Activated CD4-positive, alpha-beta T cell treated with anti-CD3 and anti-CD28 coated beads, Interleukin-2, amount 10 ng/mL, durations not matched to agents 24 days and 14 days (primary cell): ENCODE measurements at regions of chr5 and their contacts with region 1.

Region 1: GRCh38 chr5:90529194-90529938 is at the start of gene LYSMD3:
- DNase-seq: peak; percentile 98
- H3K4me3 Mint-ChIP-seq: peak within 1 kb of the TSS; percentile 98
- H3K27ac Mint-ChIP-seq: peak within 1 kb of the TSS; percentile 97
- H3K4me1 Mint-ChIP-seq: peaks cover 26% of the 10 kb centered on the region
- H3K27me3 Mint-ChIP-seq: peaks cover 24% of the 10 kb centered on the region
- total RNA-seq, gene LYSMD3: 11.3 and 12.9 TPM in 2 replicates

Region 2: DNA sequence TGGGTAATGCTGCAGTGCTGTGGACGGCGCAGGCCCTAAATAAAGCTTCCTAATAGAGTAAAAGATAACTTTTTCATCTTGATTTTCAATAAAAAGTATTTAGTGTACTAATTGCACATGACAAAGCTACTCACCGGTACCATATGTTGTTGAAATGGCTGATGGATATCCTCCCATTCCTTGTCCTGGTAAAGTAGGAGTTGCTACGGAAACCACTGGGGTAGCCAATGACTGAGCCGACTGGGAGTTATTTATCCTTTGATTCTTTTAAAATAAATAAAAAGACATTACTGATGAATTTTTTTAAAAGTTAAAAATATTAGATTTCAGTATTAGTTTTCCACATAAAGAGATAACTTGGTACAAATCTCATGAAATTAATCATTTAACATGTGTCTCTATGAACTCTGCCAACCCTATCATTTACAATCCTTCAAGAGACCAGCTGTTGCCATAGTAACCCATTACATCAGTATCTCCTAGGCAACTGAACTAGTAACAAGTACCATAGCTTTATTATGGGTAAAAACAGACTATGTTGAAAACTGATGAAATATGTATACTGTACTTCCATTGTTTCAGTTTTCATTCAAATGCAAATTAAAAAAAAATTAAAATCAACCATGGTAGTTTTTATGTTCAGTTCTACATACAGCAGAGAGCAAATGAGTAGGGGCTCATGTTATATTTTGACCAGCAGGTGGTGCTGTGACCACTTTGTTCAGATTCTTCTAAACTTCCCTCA is 1800.1 kb before region 1 on chr5:
- intact Hi-C with region 1: loop called (anchors 10 kb)
- DNase-seq: peak; percentile 85
- H3K4me3 Mint-ChIP-seq: no peak overlapping the region
- H3K27ac Mint-ChIP-seq: no peak overlapping the region
- H3K4me1 Mint-ChIP-seq: peaks cover 2% of the 10 kb centered on the region
- H3K27me3 Mint-ChIP-seq: peaks cover 10% of the 10 kb centered on the region

Region 3: GRCh38 chr5:90409318-90410177 is 119.8 kb before region 1 on chr5 and contains the start of gene CETN3:
- intact Hi-C with region 1: loop called (anchors 1 kb)
- DNase-seq: peak; percentile 96
- H3K4me3 Mint-ChIP-seq: no peak within 1 kb of the TSS
- H3K27ac Mint-ChIP-seq: no peak within 1 kb of the TSS
- H3K4me1 Mint-ChIP-seq: peaks cover 14% of the 10 kb centered on the region
- H3K27me3 Mint-ChIP-seq: peaks cover 3% of the 10 kb centered on the region
- total RNA-seq, gene CETN3: 39.4 and 40.0 TPM in 2 replicates

Region 4: GRCh38 chr5:90434116-90434714 is 95.2 kb before region 1 on chr5:
- intact Hi-C with region 1: loop called (anchors 1 kb)
- DNase-seq: peak; percentile 82
- H3K4me3 Mint-ChIP-seq: no peak overlapping the region
- H3K27ac Mint-ChIP-seq: no peak overlapping the region
- H3K4me1 Mint-ChIP-seq: peaks cover 5% of the 10 kb centered on the region
- H3K27me3 Mint-ChIP-seq: peaks cover 27% of the 10 kb centered on the region

Region 5: DNA sequence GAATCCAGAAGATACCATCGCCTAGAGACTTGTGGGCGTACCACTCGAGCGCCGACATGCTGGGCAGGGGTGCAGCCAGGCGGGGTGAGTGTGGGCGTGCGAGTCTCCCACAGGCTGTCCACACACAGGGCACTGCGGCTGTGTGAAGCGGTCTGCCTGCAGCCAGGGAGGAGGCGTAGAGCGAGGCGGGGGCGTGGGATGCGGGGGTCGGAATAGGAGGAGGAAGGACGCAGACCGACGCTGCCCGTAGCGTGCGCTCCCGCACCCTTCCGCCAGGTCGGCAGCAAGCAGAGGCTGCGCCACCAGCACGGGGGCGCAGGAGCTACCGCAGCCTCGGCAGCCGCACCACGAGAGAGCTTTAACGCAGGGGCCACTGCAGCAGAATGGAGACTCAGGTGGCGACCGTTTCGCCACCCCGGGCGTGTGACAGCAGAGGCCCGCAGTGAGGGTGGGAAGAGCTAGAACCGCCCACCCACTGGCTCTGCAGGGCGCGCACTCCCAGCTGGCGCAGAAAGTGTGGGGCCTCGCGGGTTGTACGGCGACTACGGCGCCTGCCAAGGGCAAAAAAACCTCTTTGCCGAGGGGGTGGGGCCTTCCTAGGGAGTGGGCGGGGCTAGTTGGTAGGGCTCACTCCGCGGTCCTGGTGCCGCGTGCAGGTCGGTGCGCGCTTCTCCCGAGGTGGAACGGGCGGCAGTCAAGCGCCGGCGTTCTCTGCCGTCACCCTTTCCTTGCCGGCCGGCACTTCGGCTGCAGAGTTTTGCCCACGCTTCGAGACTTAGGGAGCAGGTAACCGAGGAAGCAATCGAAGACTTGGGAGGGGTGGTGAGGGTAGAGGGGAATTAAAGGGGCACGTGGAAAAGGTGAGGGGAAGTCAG is 54.9 kb before region 1 on chr5 and contains the starts of genes MBLAC2 and POLR3G:
- intact Hi-C with region 1: loop called (anchors 1 kb)
- DNase-seq: peak; percentile 97
- H3K4me3 Mint-ChIP-seq: peak within 1 kb of the TSS; percentile 98
- H3K27ac Mint-ChIP-seq: peak within 1 kb of the TSS; percentile 97
- H3K4me1 Mint-ChIP-seq: peaks cover 38% of the 10 kb centered on the region
- H3K27me3 Mint-ChIP-seq: no peaks in the 10 kb centered on the region
- total RNA-seq, gene MBLAC2: 6.1 and 6.4 TPM in 2 replicates
- total RNA-seq, gene POLR3G: 22.2 and 25.1 TPM in 2 replicates

Region 6: GRCh38 chr5:90488791-90489190 is 40.6 kb before region 1 on chr5:
- intact Hi-C with region 1: no loop called
- DNase-seq: no peak
- H3K4me3 Mint-ChIP-seq: no peak overlapping the region
- H3K27ac Mint-ChIP-seq: no peak overlapping the region
- H3K4me1 Mint-ChIP-seq: no peaks in the 10 kb centered on the region
- H3K27me3 Mint-ChIP-seq: no peaks in the 10 kb centered on the region

Region 7: GRCh38 chr5:91126448-91126847 is 597.1 kb after region 1 on chr5:
- intact Hi-C with region 1: no loop called
- DNase-seq: peak; percentile 37
- H3K4me3 Mint-ChIP-seq: no peak overlapping the region
- H3K27ac Mint-ChIP-seq: no peak overlapping the region
- H3K4me1 Mint-ChIP-seq: no peaks in the 10 kb centered on the region
- H3K27me3 Mint-ChIP-seq: peaks cover 22% of the 10 kb centered on the region